Right ventricle myocardium superior (tissue), 1 donor: ENCODE measurements at regions of chr6 and their contacts with region 1.

Region 1: GRCh38 chr6:158697811-158698210 is 48.0 kb downstream of the SYTL3 start:
- DNase-seq: no peak
- ATAC-seq: no peak

Region 2: DNA sequence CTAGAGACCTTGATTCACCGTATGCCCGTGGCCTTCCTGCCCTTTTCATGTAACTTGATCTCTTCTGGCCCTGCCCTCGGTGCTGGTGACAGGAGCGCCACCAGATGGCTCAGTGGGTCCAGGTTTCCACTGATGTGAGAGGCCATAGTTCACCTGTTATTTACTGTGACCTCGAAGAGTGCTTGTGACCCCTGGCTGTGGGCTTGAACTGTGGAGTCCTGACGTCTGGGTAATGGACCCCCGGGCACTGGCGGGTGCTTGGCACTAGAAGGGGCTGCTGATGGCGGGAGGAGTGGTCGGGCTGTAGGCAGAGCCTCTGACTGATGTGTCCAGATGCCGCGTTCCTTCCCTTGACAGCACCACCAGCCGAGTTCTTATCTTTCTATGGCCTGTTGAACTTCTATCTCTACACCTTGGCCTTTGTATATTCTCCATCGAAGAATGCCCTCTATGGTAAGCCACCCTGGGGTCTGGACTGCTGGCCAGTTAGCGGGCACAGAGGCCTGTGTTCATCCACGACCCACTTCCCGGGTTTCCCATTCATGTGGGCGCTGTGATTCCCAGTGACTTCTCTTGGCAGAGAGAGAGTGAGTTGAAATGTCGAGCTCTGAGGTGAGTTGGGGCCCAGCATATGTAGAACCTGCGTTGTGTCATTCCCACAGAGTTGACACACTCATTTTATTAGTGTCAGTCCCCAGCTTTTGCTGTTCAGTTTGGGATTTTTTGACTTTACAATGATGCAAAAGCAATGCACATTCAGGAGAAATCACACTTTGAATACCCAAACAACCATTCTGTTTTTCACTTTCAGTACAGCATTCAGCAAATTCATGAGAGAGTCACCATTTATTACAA is 68.2 kb before region 1 on chr6:
- intact Hi-C with region 1: loop called (anchors 10 kb)
- DNase-seq: peak; percentile 57
- ATAC-seq: peak; percentile 45